GM12878 (cell line): ENCODE measurements at regions of chr11 and their contacts with region 1.

Region 1: DNA sequence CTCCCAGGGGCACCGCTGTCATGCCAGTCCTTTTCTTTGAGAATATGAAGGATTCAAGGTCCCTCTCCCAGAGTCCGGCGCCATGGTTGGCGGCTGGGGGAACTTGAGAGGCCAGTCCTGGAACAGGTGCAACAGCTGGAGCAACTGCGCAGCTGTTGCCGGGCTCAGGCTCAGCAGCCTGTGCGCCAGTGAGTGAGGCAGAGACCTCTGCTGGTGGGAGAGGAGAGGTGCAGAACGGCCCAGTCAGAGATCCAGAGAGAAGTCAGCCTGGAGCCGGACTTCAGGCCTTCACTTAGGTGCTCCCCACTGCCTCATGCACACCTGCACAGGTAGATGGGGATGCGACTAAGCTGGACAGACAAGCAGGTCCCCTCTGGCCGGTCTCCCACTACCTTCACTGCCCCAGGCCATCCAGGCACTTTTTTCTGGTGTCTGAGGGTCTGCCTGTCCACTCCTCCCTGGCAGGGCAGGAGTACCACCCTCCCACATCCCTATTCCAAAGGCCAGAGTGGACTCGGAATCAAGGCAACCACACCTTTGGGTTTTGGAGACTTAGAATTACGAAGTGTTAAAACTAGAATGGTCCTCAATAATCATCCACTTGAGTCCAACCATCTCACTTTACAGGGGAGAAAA is 4.6 kb downstream of the CHRDL2 start:
- DNase-seq: no peak
- ATAC-seq: peak; percentile 100
- H3K4me3 ChIP-seq: no peak overlapping the region
- H3K27ac ChIP-seq: no peak overlapping the region
- H3K4me1 ChIP-seq: no peaks in the 10 kb centered on the region
- H3K27me3 ChIP-seq: peaks cover 10 to 13% of the 10 kb centered on the region in 2 experiments
- CTCF ChIP-seq: peak; percentile 93 to 98 (median 93)
- EP300 ChIP-seq: no peak
- POLR2A ChIP-seq: no peak
- RAD21 ChIP-seq: peak; percentile 86

Region 2: GRCh38 chr11:74702383-74703007 is 24.2 kb before region 1 on chr11:
- CTCF ChIA-PET with region 1: interaction called, 55 read pairs
- POLR2A ChIA-PET with region 1: interaction called, 4 read pairs
- RAD21 ChIA-PET with region 1: interaction called, 27 read pairs
- SMC1A ChIA-PET with region 1: interaction called, 28 read pairs
- in situ Hi-C with region 1: no loop called
- intact Hi-C with region 1: no loop called
- DNase-seq: no peak
- ATAC-seq: peak; percentile 92
- H3K4me3 ChIP-seq: no peak overlapping the region
- H3K27ac ChIP-seq: no peak overlapping the region
- H3K4me1 ChIP-seq: no peaks in the 10 kb centered on the region
- H3K27me3 ChIP-seq: no peaks in the 10 kb centered on the region; a peak in 1 of 4 replicates
- CTCF ChIP-seq: peak; percentile 82 to 94 (median 91)
- EP300 ChIP-seq: no peak
- POLR2A ChIP-seq: no peak
- RAD21 ChIP-seq: peak; percentile 69

Region 3: DNA sequence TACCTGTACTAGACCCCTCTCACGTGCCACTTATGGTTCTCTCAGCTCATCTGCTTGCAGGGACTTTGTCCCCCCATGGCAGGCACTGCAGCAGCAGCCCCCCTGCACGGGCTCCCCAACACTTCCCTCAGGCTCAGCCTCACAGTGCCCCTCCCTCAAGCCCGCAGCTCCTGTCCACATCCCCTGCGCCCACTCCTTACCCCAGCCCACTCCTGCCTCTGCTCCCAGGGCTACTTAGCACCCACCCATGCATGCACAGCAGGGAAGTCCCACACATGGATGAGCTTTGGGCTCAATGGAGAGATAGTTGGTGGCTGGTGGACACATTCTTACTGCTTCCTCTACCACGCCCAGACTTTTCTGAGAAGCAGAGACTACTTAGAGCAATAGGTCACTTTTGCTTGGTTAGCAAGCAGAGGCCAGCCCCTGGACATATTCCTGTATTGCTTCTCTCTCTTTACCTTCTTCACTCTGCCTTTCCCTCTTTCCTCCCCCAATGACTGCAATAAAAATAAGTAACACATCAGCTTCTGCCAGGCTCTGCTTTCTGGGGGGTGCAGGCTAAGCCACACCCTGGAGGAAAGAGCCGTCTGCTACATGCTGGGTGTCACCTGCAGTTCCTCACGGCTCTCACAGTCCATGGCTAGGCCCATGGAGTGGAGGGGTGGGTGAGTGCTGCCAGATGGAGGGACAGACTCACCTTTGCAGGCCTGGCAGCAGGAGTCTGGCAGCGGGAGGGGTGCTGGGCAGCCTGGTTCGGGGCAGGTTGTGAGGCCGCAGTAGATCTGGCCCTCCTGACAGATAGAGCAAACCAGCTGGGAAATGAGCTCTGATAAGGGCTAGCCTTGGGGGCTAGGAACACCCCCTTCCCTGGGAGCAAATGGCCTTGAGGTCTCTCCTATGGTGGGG is 18.8 kb before region 1 on chr11:
- CTCF ChIA-PET with region 1: interaction called, 55 read pairs
- POLR2A ChIA-PET with region 1: no interaction called
- RAD21 ChIA-PET with region 1: interaction called, 27 read pairs
- SMC1A ChIA-PET with region 1: interaction called, 28 read pairs
- in situ Hi-C with region 1: no loop called
- intact Hi-C with region 1: no loop called
- DNase-seq: no peak
- ATAC-seq: no peak
- H3K4me3 ChIP-seq: no peak overlapping the region
- H3K27ac ChIP-seq: no peak overlapping the region
- H3K4me1 ChIP-seq: no peaks in the 10 kb centered on the region
- H3K27me3 ChIP-seq: no peaks in the 10 kb centered on the region
- CTCF ChIP-seq: no peak
- EP300 ChIP-seq: no peak
- POLR2A ChIP-seq: no peak
- RAD21 ChIP-seq: no peak

Region 4: DNA sequence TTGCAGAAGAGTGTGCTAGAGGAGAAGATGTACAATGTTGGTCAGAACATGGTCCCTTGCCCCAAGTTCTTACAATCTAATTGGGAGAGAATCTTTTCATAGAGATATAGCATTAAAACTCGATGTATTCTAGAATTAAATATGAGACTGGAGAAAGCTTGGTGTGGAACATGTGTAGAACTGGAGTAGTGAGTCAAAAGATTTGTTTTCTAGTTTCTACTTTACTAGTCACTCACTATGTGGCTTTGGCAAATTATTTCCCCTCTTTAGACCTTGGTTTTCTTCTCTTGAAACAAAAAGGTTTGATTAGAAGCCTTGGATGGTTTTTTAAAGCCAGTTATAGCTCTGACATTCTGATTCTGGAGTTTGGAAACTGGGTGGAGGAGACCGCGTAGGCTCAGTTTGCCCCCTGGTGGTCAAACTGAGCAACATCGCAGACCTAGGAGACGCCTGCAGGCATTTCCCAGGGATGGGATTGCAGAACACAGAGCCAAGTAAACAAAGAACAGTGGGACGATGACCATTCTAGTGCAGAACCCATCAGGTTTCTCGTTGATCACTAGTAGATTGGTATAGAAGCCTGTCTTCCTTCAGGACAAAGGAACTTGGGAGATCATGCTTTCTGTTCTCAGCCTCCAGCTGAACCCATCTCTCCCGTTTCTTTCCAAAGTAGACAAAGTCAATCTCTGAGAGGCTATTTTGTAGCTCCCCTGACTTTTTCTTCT is 13.0 kb after region 1 on chr11:
- CTCF ChIA-PET with region 1: interaction called, 30 read pairs
- POLR2A ChIA-PET with region 1: no interaction called
- RAD21 ChIA-PET with region 1: interaction called, 8 read pairs
- SMC1A ChIA-PET with region 1: interaction called, 5 read pairs
- in situ Hi-C with region 1: no loop called
- intact Hi-C with region 1: no loop called
- DNase-seq: no peak
- ATAC-seq: peak; percentile 93
- H3K4me3 ChIP-seq: no peak overlapping the region
- H3K27ac ChIP-seq: no peak overlapping the region
- H3K4me1 ChIP-seq: no peaks in the 10 kb centered on the region
- H3K27me3 ChIP-seq: peaks cover 0 to 2% of the 10 kb centered on the region in 2 experiments; a peak in 1 of 4 replicates
- CTCF ChIP-seq: peak; percentile 83 to 92 (median 89)
- EP300 ChIP-seq: no peak
- POLR2A ChIP-seq: no peak
- RAD21 ChIP-seq: peak; percentile 62

Region 5: GRCh38 chr11:74863410-74863809 is 136.7 kb after region 1 on chr11:
- CTCF ChIA-PET with region 1: no interaction called
- POLR2A ChIA-PET with region 1: no interaction called
- RAD21 ChIA-PET with region 1: no interaction called
- SMC1A ChIA-PET with region 1: no interaction called
- in situ Hi-C with region 1: no loop called
- intact Hi-C with region 1: no loop called
- DNase-seq: no peak
- ATAC-seq: no peak
- H3K4me3 ChIP-seq: no peak overlapping the region
- H3K27ac ChIP-seq: no peak overlapping the region
- H3K4me1 ChIP-seq: no peaks in the 10 kb centered on the region
- H3K27me3 ChIP-seq: no peaks in the 10 kb centered on the region
- CTCF ChIP-seq: no peak
- EP300 ChIP-seq: no peak
- POLR2A ChIP-seq: no peak
- RAD21 ChIP-seq: no peak